ENCODE measurements at regions of chr2 and their contacts with region 1.

Region 1: DNA sequence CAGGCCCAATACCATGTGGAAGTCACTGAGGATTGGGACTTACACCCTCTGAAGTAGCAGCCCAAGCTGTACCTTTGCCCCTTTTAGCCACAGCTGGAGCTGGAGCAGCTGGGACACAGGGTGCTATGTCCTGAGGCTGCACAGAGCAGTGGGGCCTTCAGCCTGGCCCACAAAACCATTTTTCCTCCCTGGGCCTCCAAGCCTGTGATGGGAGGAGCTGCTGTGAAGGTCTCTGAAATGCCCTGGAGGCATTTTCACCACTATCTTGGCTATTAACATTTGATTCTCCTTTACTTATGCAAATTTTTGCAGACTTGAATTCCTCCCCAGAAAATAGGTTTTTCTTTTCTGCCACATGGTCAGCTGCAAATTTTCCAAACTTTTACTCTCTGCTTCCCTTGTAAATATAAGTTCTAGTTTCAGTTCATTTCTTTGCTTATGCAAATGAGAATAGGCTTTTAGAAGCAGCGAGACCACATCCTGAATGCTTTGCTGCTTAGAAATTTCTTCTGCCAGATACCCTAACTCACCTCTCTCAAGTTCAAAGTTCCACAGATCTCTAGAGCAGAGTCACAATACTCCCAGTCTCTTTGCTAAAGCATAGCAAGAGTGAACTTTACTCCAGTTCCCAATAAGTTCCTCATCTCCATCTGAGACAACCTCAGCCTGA is 213.8 kb upstream of the MGAT5 start:
- DNase-seq: peak; percentile 45
- ATAC-seq: peak; percentile 59
- H3K4me3 ChIP-seq: peak overlapping the region in 3 of 5 experiments; percentile 3 to 18 (median 17)
- H3K4me3 Mint-ChIP-seq: peak overlapping the region; percentile 70
- H3K27ac ChIP-seq: peak overlapping the region; percentile 75 to 82
- H3K27ac Mint-ChIP-seq: peak overlapping the region; percentile 91
- H3K4me1 ChIP-seq: peaks cover 51 to 54% of the 10 kb centered on the region in 2 donors
- H3K4me1 Mint-ChIP-seq: peaks cover 56% of the 10 kb centered on the region
- H3K27me3 ChIP-seq: no peaks in the 10 kb centered on the region
- H3K27me3 Mint-ChIP-seq: no peaks in the 10 kb centered on the region
- CTCF ChIP-seq: no peak

Region 2: GRCh38 chr2:133953524-133953923 is 86.5 kb before region 1 on chr2:
- CTCF ChIA-PET with region 1: no interaction called
- POLR2A ChIA-PET with region 1: no interaction called
- intact Hi-C with region 1: loop called (anchors 2 kb)
- DNase-seq: peak; percentile 83
- ATAC-seq: peak; percentile 88
- H3K4me3 ChIP-seq: peak overlapping the region in 1 of 5 experiments; percentile 18
- H3K4me3 Mint-ChIP-seq: peak overlapping the region; percentile 64
- H3K27ac ChIP-seq: peak overlapping the region; percentile 63 to 73
- H3K27ac Mint-ChIP-seq: peak overlapping the region; percentile 85
- H3K4me1 ChIP-seq: peaks cover 75 to 76% of the 10 kb centered on the region in 2 donors
- H3K4me1 Mint-ChIP-seq: peaks cover 74% of the 10 kb centered on the region
- H3K27me3 ChIP-seq: no peaks in the 10 kb centered on the region
- H3K27me3 Mint-ChIP-seq: no peaks in the 10 kb centered on the region
- CTCF ChIP-seq: no peak

Region 3: DNA sequence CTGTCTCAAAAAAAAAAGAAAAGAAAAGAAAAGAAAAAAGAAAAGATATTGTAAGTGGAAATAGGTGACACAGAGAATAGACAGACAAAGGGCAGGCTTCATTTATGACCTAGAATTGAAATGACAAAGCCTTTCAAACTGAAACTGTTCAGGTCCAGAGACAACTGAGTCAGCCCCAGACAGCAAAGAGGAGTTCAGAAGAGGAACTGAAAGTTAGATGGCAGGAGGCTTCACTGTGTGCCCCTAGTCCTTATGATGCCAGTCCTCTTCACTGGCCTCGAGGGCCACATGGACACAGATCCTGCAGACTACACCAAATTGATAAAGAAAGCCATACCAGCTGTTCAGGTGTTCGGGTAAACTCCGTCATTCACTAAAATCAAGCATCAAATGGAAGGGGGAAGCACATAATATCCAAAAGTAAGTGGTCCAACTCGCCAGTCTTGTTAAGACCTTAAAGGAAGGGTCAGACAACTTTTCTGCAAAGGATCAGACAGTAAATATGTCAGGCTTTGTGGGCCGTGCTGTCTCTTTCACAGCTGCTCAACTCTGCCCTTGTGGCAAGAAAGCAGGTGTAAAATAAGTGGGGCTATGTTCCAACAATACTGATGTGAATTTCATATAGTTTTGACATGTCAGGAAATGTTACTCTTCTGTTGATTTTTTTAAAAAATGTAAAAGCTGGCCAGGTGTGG is 18.1 kb before region 1 on chr2:
- CTCF ChIA-PET with region 1: no interaction called
- POLR2A ChIA-PET with region 1: no interaction called
- intact Hi-C with region 1: loop called (anchors 2 kb)
- DNase-seq: peak; percentile 52
- ATAC-seq: peak; percentile 94
- H3K4me3 ChIP-seq: no peak overlapping the region
- H3K4me3 Mint-ChIP-seq: no peak overlapping the region
- H3K27ac ChIP-seq: no peak overlapping the region
- H3K27ac Mint-ChIP-seq: peak overlapping the region; percentile 60
- H3K4me1 ChIP-seq: peaks cover 30% of the 10 kb centered on the region in 2 donors
- H3K4me1 Mint-ChIP-seq: peaks cover 27% of the 10 kb centered on the region
- H3K27me3 ChIP-seq: peaks cover 0 to 3% (median 0%) of the 10 kb centered on the region in 4 experiments
- H3K27me3 Mint-ChIP-seq: no peaks in the 10 kb centered on the region
- CTCF ChIP-seq: no peak

Region 4: GRCh38 chr2:134460583-134460998 is 420.5 kb after region 1 on chr2:
- CTCF ChIA-PET with region 1: no interaction called
- POLR2A ChIA-PET with region 1: no interaction called
- intact Hi-C with region 1: no loop called
- DNase-seq: peak; percentile 59
- ATAC-seq: peak; percentile 76
- H3K4me3 ChIP-seq: no peak overlapping the region
- H3K4me3 Mint-ChIP-seq: no peak overlapping the region
- H3K27ac ChIP-seq: no peak overlapping the region
- H3K27ac Mint-ChIP-seq: peak overlapping the region; percentile 37
- H3K4me1 ChIP-seq: no peaks in the 10 kb centered on the region
- H3K4me1 Mint-ChIP-seq: peaks cover 3% of the 10 kb centered on the region
- H3K27me3 ChIP-seq: no peaks in the 10 kb centered on the region
- H3K27me3 Mint-ChIP-seq: no peaks in the 10 kb centered on the region
- CTCF ChIP-seq: peak; percentile 61